ENCODE measurements at regions of chr1 and their contacts with region 1.

Region 1: DNA sequence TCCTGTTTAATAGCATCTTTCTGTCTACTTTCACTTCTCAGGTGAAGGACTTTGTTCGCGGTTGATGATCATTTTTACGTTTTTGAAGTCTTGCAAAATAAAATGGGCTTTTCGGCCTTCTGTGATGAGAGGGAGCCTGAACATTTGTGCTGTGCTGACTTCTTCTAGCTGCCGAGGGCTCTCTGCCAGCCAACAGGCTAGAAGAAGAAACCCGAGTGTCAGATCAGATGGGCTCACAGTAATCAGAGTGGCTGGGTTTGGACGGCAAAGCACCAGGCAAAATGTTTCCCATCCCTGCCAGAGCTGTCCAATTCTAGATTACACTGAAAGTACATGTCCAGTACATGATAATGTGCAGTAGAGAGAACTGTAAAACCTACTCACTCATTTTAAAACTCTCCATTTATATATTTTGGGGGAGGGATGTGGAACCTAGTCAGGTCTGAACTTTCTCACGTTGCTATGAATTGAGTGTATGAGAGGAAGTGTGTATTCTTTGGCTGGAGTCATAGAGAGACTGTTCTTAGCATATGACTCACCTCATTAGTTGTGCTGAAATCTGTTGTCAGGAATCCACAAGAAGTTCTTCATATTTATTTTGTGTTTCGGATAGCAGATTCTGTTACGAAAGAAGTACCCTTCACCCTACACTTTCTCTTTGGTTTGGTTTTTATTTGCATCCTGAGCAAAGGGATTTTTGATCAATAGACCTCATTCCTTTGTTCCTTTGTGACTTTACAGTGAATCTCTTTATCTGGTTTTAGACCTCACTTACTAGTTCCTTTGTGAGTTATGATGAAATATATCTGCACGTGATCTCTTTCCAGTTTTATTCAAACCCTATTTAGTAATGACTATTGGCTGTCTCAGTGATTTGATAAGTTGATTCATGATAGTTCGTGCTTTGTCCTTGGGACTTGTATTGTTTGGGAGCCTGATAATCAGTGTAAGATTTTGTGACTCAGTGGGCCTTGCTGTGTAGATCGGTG is 4.8 kb downstream of the ATP1A1 start:
- DNase-seq: peak; percentile 20
- H3K4me3 Mint-ChIP-seq: peak overlapping the region; percentile 85
- H3K27ac Mint-ChIP-seq: peak overlapping the region; percentile 85
- H3K4me1 Mint-ChIP-seq: peaks cover 77% of the 10 kb centered on the region
- H3K27me3 Mint-ChIP-seq: no peaks in the 10 kb centered on the region

Region 2: GRCh38 chr1:116044071-116044470 is 333.8 kb before region 1 on chr1:
- intact Hi-C with region 1: no loop called
- DNase-seq: no peak
- H3K4me3 Mint-ChIP-seq: no peak overlapping the region
- H3K27ac Mint-ChIP-seq: no peak overlapping the region
- H3K4me1 Mint-ChIP-seq: no peaks in the 10 kb centered on the region
- H3K27me3 Mint-ChIP-seq: peaks cover 11% of the 10 kb centered on the region

Region 3: DNA sequence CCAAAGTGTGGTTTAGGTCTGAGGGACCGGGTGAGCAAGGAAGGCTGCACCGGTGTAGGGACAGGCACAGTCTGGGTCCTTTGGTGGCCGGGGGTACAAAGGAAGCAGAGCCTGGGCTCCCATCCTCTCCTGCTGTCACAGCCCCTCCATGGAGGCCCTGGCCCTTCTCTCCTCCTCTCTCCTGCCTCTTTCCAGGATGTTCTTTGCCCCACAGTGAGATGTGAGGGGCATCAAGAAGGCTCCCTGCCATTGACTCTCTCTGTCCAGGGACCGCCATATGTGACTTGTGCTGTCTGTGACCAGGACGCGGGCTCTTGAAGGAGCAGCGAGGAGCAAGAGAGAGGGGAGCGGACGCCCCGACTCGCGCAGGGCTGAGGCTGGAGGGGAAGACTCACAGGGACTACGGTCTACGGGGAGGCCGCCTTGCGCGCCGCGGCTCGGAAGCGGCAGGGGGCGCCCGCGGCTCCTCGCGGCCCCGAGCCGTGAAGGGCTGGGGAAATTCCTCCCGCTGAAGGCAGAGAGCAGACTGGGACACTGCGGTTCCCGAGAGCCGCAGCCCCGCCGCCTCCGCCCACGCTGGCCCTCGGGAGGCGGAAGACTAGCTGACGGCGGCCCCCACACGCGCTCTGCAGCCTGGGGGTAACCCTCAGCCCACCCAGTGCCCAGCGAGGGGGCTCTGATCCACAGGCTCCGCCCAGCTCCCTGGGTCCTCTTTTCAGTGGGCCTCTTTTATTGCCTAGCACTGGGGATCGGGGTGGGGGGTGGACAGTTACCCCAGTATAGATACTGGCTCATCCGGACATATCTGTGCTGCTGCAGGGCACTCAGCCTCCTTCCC is 225.9 kb before region 1 on chr1:
- intact Hi-C with region 1: loop called (anchors 1 kb)
- DNase-seq: peak; percentile 77
- H3K4me3 Mint-ChIP-seq: peak overlapping the region; percentile 65
- H3K27ac Mint-ChIP-seq: peak overlapping the region; percentile 49
- H3K4me1 Mint-ChIP-seq: peaks cover 16% of the 10 kb centered on the region
- H3K27me3 Mint-ChIP-seq: peaks cover 20% of the 10 kb centered on the region

Region 4: DNA sequence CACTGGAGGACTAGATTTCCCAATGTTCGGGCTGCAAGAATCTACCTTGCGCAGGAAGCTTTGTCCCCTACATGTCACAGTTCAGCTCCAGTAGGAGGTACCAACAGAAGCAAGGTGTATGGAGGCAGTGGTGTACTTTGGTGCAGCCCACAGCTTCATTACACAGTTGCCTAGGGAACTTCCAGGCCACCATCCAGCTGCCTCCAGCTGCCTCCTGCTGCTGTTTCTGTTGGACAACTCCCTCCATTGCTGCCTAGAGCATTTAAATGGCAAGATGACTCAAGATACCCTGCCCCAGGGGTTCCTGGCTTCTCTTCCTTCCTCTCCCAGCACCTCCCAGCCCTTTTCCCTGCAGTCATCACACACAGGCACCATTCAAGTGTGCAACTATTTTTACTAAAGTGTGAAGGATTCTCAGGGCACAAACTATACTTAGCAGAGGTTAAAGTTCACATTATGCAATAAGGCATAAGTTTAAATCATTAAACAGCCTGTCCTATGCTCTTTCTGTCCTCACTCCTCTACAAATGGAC is 43.8 kb before region 1 on chr1:
- intact Hi-C with region 1: no loop called
- DNase-seq: no peak
- H3K4me3 Mint-ChIP-seq: no peak overlapping the region
- H3K27ac Mint-ChIP-seq: no peak overlapping the region
- H3K4me1 Mint-ChIP-seq: peaks cover 4% of the 10 kb centered on the region
- H3K27me3 Mint-ChIP-seq: no peaks in the 10 kb centered on the region

Region 5: GRCh38 chr1:116390195-116390594 is 12.4 kb after region 1 on chr1:
- intact Hi-C with region 1: loop called (anchors 1 kb)
- DNase-seq: no peak
- H3K4me3 Mint-ChIP-seq: no peak overlapping the region
- H3K27ac Mint-ChIP-seq: no peak overlapping the region
- H3K4me1 Mint-ChIP-seq: peaks cover 58% of the 10 kb centered on the region
- H3K27me3 Mint-ChIP-seq: no peaks in the 10 kb centered on the region

Region 6: DNA sequence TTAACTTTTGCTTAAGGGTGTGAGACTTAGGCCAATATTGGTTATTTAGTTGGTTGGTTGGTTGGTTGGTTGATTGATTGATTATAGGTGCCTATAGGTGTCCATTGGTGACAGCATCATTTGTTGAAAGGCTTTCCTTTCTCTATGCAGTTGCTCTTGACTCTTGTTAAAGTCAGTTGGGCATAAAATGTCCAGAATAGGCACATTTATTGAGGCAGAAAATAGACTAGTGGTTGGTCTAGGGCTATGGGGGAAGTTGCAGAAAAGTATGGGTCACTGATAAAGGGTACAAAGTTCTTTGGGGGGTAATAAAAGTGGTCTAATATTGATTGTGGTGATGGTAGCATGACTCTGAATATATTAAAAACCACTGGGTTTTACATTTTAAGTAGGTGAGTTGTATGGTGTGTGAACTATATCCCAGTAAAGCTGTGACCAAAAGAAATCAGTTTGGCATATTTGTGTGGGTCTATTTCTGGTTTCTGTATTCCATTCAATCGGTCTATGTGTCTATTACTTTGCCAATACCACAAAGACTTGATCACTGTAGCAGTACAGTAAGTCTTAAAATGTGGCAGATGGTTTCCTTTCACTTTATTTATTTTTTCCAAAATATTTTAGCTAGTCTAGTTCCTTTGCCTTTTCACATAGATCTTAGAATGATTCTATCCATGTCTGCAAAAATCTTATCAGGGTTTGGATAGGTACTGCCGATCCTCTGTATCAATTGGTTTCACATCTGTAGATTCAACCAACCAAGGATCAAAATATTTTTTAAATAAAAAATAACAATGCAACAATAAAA is 58.2 kb after region 1 on chr1:
- intact Hi-C with region 1: loop called (anchors 2 kb)
- DNase-seq: no peak
- H3K4me3 Mint-ChIP-seq: no peak overlapping the region
- H3K27ac Mint-ChIP-seq: peak overlapping the region; percentile 1
- H3K4me1 Mint-ChIP-seq: no peaks in the 10 kb centered on the region
- H3K27me3 Mint-ChIP-seq: peaks cover 16% of the 10 kb centered on the region

Region 7: DNA sequence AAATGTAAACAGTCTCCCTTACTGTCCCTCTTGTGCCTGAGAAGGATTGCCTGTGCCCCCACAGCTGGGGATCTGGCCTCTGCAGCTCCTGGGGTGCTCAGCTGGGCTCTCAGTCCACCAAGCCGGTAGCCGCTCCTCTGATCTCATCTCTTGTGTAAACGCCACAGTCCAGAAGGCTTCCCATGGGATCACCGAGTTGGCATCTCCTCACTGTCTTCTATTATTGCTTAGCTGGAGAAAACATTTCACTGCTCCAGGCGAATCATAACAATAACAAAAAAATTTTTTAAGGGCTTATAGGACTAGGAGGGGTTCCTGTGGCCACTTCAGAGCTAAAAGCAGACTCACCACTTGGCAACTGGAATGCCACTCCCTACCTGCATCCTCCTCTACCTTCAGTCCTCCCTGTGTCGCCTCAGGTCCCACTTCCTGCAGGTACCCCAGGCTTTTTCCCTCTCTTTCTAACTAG is 71.0 kb after region 1 on chr1:
- intact Hi-C with region 1: no loop called
- DNase-seq: no peak
- H3K4me3 Mint-ChIP-seq: no peak overlapping the region
- H3K27ac Mint-ChIP-seq: no peak overlapping the region
- H3K4me1 Mint-ChIP-seq: no peaks in the 10 kb centered on the region
- H3K27me3 Mint-ChIP-seq: peaks cover 7% of the 10 kb centered on the region

Region 8: GRCh38 chr1:116514708-116515525 is 137.1 kb after region 1 on chr1:
- intact Hi-C with region 1: loop called (anchors 2 kb)
- DNase-seq: peak; percentile 74
- H3K4me3 Mint-ChIP-seq: peak overlapping the region; percentile 75
- H3K27ac Mint-ChIP-seq: peak overlapping the region; percentile 97
- H3K4me1 Mint-ChIP-seq: peaks cover 80% of the 10 kb centered on the region
- H3K27me3 Mint-ChIP-seq: no peaks in the 10 kb centered on the region

Region 9: DNA sequence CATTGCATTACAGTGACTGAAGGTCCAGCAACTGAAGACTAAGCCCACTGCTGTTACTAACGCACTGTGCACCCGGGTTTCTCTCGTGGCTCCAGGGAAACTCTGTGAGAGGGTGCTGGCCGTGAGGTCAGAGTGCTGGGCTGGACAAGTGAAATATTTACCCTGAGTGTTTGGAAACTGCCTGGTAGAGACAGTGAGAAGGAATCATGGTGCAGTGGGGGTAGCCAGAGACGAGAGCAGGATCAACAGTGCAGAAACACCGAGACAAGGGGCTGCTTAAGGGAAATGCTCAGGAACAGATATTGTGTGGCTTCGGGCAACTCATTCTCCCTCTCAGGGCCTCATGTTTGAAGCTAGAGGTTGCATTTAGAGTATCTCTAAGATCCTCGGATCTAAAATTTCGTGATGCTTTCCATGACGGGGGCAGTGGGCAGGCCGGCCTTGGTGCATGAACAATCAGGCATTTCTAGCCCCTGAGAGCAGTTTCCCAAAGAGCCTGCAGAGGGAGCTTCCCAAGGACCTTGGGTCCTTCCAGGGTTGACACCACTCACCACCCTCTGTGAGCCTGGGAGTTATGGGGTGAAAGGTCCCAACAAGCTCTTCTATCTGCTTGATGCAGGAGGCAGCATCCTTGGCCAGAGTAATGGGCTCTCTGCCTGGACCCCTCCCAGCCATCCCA is 386.1 kb after region 1 on chr1:
- intact Hi-C with region 1: loop called (anchors 5 kb)
- DNase-seq: peak; percentile 50
- H3K4me3 Mint-ChIP-seq: peak overlapping the region; percentile 84
- H3K27ac Mint-ChIP-seq: peak overlapping the region; percentile 100
- H3K4me1 Mint-ChIP-seq: peaks cover 95% of the 10 kb centered on the region
- H3K27me3 Mint-ChIP-seq: peaks cover 3% of the 10 kb centered on the region

Region 10: GRCh38 chr1:117367047-117368018 is 989.5 kb after region 1 on chr1 and contains the start of gene MAN1A2:
- intact Hi-C with region 1: loop called (anchors 5 kb)
- DNase-seq: peak; percentile 74
- H3K4me3 Mint-ChIP-seq: peak within 1 kb of the TSS; percentile 97
- H3K27ac Mint-ChIP-seq: peak within 1 kb of the TSS; percentile 88
- H3K4me1 Mint-ChIP-seq: peaks cover 60% of the 10 kb centered on the region
- H3K27me3 Mint-ChIP-seq: no peaks in the 10 kb centered on the region
- total RNA-seq, gene MAN1A2: 30.1 and 32.5 TPM in 2 replicates

Measured in activated T-helper 1 cell treated with anti-CD3 and anti-CD28 coated beads, Interleukin-12 subunit alpha, Interleukin-12 subunit beta, Interleukin-2, Interleukin-4 antibody, amounts not matched to agents 30 ng/mL and 10 ng/mL and 1 ng/mL, durations not matched to agents 14 hours and 24 hours and 36 hours (primary cell).